IMR-90 (cell line): ENCODE measurements at regions of chr15 and their contacts with region 1.

Region 1: DNA sequence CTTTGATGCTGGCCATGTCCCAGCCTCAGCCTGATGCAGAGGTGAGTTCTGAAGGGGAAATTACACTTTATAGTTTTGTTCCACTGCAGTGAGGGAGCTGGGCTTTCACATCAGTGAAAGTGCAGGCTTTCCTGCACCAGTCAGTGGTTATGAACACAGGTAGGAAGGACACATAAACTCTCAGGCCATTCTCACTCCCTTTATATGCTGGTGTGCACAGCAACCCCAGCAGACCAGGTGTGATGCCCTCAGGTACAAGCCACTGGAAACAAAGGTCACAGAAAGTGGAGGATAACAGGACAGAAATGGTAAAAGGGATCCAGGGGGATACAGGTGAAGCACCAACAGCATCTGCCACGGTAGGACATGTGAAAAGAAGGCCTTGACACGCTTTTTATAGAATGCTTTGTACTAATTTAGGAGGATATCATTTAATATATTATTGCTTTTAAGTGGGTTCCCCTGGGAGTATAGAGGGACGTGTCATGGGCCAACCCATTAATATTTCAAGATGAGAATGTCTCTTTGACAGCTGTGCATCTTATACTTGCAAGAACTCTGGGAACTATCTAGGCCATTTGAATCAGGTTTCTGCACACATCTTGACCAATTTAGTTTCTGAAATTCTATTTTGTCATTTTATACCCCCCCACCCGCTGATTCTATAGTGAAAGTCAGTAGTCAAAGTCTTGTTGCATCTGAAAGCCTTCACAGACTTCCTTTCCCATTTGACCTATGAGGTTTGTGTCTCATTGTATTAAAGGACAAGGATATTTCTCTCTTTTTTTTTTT is 25.0 kb upstream of the BLM start:
- DNase-seq: no peak
- ATAC-seq: no peak
- H3K4me3 ChIP-seq: no peak overlapping the region
- H3K27ac ChIP-seq: no peak overlapping the region
- H3K4me1 ChIP-seq: no peaks in the 10 kb centered on the region
- H3K27me3 ChIP-seq: no peaks in the 10 kb centered on the region
- CTCF ChIP-seq: no peak
- POLR2A ChIP-seq: no peak
- RAD21 ChIP-seq: no peak

Region 2: GRCh38 chr15:90037961-90038631 is 654.1 kb before region 1 on chr15:
- CTCF ChIA-PET with region 1: no interaction called
- POLR2A ChIA-PET with region 1: no interaction called
- dilution Hi-C with region 1: no loop called
- in situ Hi-C with region 1: no loop called
- intact Hi-C with region 1: no loop called
- DNase-seq: peak; percentile 53
- ATAC-seq: no peak
- H3K4me3 ChIP-seq: no peak overlapping the region
- H3K27ac ChIP-seq: peak overlapping the region; percentile 53
- H3K4me1 ChIP-seq: peaks cover 32% of the 10 kb centered on the region
- H3K27me3 ChIP-seq: no peaks in the 10 kb centered on the region
- CTCF ChIP-seq: no peak
- POLR2A ChIP-seq: no peak
- RAD21 ChIP-seq: no peak

Region 3: GRCh38 chr15:90451053-90451850 is 240.9 kb before region 1 on chr15:
- CTCF ChIA-PET with region 1: no interaction called
- POLR2A ChIA-PET with region 1: no interaction called
- dilution Hi-C with region 1: no loop called
- in situ Hi-C with region 1: no loop called
- intact Hi-C with region 1: no loop called
- DNase-seq: peak; percentile 87
- ATAC-seq: peak; percentile 68
- H3K4me3 ChIP-seq: no peak overlapping the region
- H3K27ac ChIP-seq: no peak overlapping the region
- H3K4me1 ChIP-seq: peaks cover 8% of the 10 kb centered on the region
- H3K27me3 ChIP-seq: no peaks in the 10 kb centered on the region
- CTCF ChIP-seq: no peak
- POLR2A ChIP-seq: no peak
- RAD21 ChIP-seq: no peak

Region 4: DNA sequence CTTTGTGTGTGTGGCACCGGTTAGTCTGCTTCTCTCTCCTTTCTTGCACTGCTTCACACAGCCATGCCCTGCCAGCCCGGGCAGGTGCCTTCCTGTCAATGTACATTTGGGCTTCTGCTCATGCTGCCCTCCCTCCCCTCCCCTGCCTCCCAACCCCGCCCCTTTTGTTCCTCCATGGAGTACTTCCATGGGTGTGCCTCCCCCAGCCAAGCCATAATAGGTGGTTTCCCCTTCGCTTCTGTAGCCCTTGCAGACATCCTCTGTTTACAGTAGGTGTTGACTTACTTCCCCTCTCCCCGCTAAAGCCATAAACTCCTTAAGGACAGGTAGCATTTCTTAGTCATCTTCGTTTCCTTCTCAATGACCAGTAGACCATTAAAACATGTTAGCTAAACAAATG is 194.3 kb before region 1 on chr15:
- CTCF ChIA-PET with region 1: no interaction called
- POLR2A ChIA-PET with region 1: no interaction called
- dilution Hi-C with region 1: no loop called
- in situ Hi-C with region 1: no loop called
- intact Hi-C with region 1: loop called (anchors 5 kb)
- DNase-seq: no peak
- ATAC-seq: no peak
- H3K4me3 ChIP-seq: no peak overlapping the region
- H3K27ac ChIP-seq: no peak overlapping the region
- H3K4me1 ChIP-seq: no peaks in the 10 kb centered on the region
- H3K27me3 ChIP-seq: no peaks in the 10 kb centered on the region
- CTCF ChIP-seq: no peak
- POLR2A ChIP-seq: no peak
- RAD21 ChIP-seq: no peak